Heart left ventricle (tissue), 16 donors: ENCODE measurements at regions of chr19 and their contacts with region 1.

Region 1: DNA sequence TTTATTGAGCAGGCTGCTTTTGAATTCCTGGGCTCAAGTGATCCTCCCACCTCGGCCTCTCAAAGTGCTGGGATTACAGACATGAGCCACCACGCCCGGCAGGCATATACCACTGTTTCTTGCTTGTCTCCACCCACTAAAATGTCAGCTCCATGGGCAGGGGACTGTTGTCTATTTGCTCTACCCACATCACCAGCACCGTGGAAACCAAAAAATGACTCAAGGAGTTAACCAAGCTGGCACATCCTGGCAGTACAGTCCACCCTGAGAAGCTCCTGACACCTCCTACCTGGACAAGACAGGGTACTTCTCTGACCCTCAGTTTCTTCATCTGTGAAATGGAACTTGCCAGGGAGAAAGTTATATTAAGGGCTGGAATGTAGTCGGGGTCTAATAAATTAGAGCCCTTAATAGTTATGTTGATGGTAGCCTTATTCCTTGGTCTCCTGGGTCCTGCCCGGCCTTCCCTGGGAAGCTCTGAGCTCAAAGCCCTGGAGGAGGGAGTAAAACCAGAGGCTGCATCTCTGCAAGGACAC is 13.9 kb downstream of the RDH8 start:
- DNase-seq: no peak
- ATAC-seq: peak in 1 of 4 donors; percentile 8
- H3K4me3 ChIP-seq: peak overlapping the region in 1 of 12 donors; percentile 17
- H3K27ac ChIP-seq: peak overlapping the region in 1 of 12 donors; percentile 20
- H3K4me1 ChIP-seq: peaks cover 0 to 9% (median 6%) of the 10 kb centered on the region in 12 donors
- H3K27me3 ChIP-seq: peaks cover 0 to 28% (median 3%) of the 10 kb centered on the region in 9 donors
- CTCF ChIP-seq: no peak
- POLR2A ChIP-seq: no peak

Region 2: GRCh38 chr19:9923440-9923839 is 103.8 kb before region 1 on chr19:
- intact Hi-C with region 1: loop called in 1 of 10 experiments (anchors 2 kb)
- DNase-seq: no peak
- ATAC-seq: no peak
- H3K4me3 ChIP-seq: no peak overlapping the region
- H3K27ac ChIP-seq: no peak overlapping the region
- H3K4me1 ChIP-seq: no peaks in the 10 kb centered on the region
- H3K27me3 ChIP-seq: peaks cover 0 to 4% (median 0%) of the 10 kb centered on the region in 9 donors
- CTCF ChIP-seq: no peak
- POLR2A ChIP-seq: no peak

Region 3: DNA sequence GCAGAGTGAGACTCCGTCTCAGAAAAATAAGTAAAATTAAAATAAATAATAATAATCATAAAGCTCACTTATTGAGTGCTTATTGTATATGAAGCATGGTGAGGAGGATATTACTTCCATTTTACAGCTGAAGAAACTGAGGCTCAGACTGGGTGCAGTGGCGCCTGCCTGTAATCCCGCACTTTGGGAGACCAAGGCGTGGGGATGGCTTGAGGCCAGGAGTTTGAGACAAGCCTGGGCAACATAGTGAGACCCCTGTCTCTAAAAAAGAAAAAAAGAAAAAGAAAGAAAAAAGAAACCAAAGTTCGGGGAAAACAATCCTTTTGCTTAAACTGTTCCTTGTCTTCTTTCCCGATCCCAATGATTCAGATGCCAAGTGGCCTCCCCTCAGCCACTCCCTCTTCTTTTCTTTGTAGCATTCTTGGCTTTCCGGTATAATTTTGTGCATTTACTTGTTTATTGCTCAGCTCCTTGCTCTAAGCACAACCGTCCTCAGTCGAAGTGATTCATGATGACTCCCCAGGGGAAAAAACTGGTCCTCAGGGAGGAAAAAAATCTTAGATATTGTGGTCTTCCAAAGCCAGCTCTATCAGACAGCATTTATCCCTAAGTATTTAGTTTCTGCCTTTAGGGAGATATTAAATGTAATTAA is 93.4 kb after region 1 on chr19:
- intact Hi-C with region 1: no loop called
- DNase-seq: no peak
- ATAC-seq: no peak
- H3K4me3 ChIP-seq: peak overlapping the region in 4 of 12 donors; percentile 7 to 98 (median 8)
- H3K27ac ChIP-seq: peak overlapping the region in 3 of 12 donors; percentile 62 to 91 (median 79)
- H3K4me1 ChIP-seq: peaks cover 0 to 24% (median 11%) of the 10 kb centered on the region in 12 donors
- H3K27me3 ChIP-seq: no peaks in the 10 kb centered on the region
- CTCF ChIP-seq: no peak
- POLR2A ChIP-seq: no peak